ENCODE measurements at regions of chr18 and their contacts with region 1.

Region 1: DNA sequence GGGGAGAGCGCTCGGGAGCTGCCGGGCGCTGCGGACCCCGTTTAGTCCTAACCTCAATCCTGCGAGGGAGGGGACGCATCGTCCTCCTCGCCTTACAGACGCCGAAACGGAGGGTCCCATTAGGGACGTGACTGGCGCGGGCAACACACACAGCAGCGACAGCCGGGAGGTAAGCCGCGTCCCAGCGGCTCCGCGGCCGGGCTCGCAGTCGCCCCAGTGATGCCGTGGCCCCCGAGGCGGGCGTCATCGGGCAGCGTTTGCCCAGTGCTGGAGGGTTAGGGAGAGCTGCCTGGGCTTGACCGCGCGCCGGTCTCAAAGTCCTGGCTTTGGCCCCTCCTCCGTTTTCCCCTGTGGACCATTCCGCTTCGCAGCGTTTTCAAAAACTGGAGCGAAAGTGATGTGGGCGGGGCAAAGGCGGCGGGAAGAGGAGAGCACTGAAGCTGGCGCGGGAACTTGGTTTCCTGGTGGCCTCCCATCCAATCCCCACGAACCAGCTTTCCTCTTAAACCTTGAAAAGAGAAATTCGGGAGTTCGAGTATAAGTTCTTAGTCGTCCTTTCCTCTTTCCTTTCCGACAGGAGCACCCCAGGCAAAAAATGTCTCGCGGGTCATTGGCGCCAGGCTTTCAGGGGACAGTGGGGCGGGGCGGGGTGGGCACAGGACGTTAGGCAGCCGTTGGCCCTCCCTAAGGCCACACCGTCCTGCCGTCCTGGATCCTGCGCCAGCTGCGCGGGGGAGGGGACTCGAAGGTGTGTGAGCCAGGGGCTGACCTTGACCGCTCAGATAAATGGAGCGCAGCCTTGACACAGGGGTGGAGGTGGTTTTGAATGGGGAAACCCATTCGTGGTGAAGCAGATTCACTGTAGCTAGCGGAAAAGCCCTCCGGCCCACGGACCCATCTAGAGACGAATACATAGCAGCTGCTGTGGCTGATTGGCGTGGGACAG is 821 bp downstream of the TYMS start:
- DNase-seq: peak; percentile 94
- H3K4me3 ChIP-seq: peak overlapping the region; percentile 82
- H3K4me3 Mint-ChIP-seq: peak overlapping the region; percentile 89
- H3K27ac Mint-ChIP-seq: peak overlapping the region; percentile 78
- H3K4me1 ChIP-seq: no peaks in the 10 kb centered on the region
- H3K4me1 Mint-ChIP-seq: no peaks in the 10 kb centered on the region
- H3K27me3 ChIP-seq: no peaks in the 10 kb centered on the region
- H3K27me3 Mint-ChIP-seq: no peaks in the 10 kb centered on the region
- CTCF ChIP-seq: no peak

Region 2: GRCh38 chr18:505483-506122 is 152.7 kb before region 1 on chr18:
- CTCF ChIA-PET with region 1: no interaction called
- POLR2A ChIA-PET with region 1: no interaction called
- intact Hi-C with region 1: no loop called
- DNase-seq: no peak
- H3K4me3 ChIP-seq: no peak overlapping the region
- H3K4me3 Mint-ChIP-seq: no peak overlapping the region
- H3K27ac Mint-ChIP-seq: peak overlapping the region; percentile 70
- H3K4me1 ChIP-seq: peaks cover 42% of the 10 kb centered on the region
- H3K4me1 Mint-ChIP-seq: peaks cover 32% of the 10 kb centered on the region
- H3K27me3 ChIP-seq: no peaks in the 10 kb centered on the region
- H3K27me3 Mint-ChIP-seq: no peaks in the 10 kb centered on the region
- CTCF ChIP-seq: no peak

Region 3: GRCh38 chr18:681985-682384 is 23.7 kb after region 1 on chr18:
- CTCF ChIA-PET with region 1: no interaction called
- POLR2A ChIA-PET with region 1: interaction called, 10 read pairs
- intact Hi-C with region 1: no loop called
- DNase-seq: no peak
- H3K4me3 ChIP-seq: no peak overlapping the region
- H3K4me3 Mint-ChIP-seq: no peak overlapping the region
- H3K27ac Mint-ChIP-seq: peak overlapping the region; percentile 71
- H3K4me1 ChIP-seq: peaks cover 49% of the 10 kb centered on the region
- H3K4me1 Mint-ChIP-seq: peaks cover 35% of the 10 kb centered on the region
- H3K27me3 ChIP-seq: no peaks in the 10 kb centered on the region
- H3K27me3 Mint-ChIP-seq: no peaks in the 10 kb centered on the region
- CTCF ChIP-seq: no peak

Region 4: DNA sequence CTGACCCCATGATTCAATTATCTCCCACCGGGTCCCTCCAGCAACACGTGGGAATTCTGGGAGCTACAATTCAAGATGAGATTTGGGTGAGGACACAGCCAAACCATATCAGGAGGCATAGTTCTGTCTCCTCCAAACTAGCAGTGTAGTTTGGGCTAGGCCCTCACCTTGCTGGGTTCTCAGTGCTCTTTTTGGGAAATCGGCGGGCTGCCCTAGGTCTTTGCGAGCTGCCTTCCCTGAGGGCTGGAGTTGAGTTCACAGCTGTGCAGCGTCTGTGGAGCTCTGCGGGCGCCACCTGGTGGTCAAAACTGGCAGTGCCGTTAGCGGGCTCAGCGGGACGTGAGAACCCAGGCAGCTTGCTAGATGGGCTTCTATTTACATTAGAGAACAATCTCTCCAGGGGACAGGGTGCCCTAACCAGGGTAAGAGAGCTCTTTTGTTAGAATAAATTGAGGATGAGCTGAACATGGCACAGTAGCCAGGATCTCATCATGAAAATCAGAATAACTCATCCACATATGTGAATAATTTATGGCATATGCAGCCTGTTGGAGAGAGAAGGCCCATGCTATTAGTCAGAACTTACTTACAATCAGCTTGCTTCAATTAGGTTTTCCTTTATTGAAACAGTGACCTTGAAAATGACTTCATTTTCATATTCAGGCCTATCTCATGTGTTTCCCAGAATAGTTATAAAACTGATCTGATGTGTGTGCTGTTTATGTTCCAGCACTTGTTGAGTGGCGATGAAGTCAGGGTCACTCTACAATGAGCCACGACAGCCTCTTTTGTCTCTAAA is 181.1 kb after region 1 on chr18:
- CTCF ChIA-PET with region 1: no interaction called
- POLR2A ChIA-PET with region 1: no interaction called
- intact Hi-C with region 1: loop called (anchors 10 kb)
- DNase-seq: peak; percentile 78 to 86
- H3K4me3 ChIP-seq: no peak overlapping the region
- H3K4me3 Mint-ChIP-seq: no peak overlapping the region
- H3K27ac Mint-ChIP-seq: no peak overlapping the region
- H3K4me1 ChIP-seq: no peaks in the 10 kb centered on the region; the same call in 1 of the 2 replicates
- H3K4me1 Mint-ChIP-seq: peaks cover 13% of the 10 kb centered on the region
- H3K27me3 ChIP-seq: no peaks in the 10 kb centered on the region
- H3K27me3 Mint-ChIP-seq: no peaks in the 10 kb centered on the region
- CTCF ChIP-seq: peak; percentile 84 to 92